Activated CD4-positive, alpha-beta memory T cell treated with anti-CD3 and anti-CD28 coated beads for 36 hours (primary cell): ENCODE measurements at regions of chr5 and their contacts with region 1.

Region 1: GRCh38 chr5:95961617-95962474 is at the start of gene ELL2:
- DNase-seq: peak; percentile 99
- H3K4me3 Mint-ChIP-seq: peak within 1 kb of the TSS; percentile 98
- H3K27ac Mint-ChIP-seq: peak within 1 kb of the TSS; percentile 98
- H3K4me1 Mint-ChIP-seq: peaks cover 62% of the 10 kb centered on the region
- H3K27me3 Mint-ChIP-seq: no peaks in the 10 kb centered on the region
- total RNA-seq, gene ELL2: 127 to 132 TPM

Region 2: DNA sequence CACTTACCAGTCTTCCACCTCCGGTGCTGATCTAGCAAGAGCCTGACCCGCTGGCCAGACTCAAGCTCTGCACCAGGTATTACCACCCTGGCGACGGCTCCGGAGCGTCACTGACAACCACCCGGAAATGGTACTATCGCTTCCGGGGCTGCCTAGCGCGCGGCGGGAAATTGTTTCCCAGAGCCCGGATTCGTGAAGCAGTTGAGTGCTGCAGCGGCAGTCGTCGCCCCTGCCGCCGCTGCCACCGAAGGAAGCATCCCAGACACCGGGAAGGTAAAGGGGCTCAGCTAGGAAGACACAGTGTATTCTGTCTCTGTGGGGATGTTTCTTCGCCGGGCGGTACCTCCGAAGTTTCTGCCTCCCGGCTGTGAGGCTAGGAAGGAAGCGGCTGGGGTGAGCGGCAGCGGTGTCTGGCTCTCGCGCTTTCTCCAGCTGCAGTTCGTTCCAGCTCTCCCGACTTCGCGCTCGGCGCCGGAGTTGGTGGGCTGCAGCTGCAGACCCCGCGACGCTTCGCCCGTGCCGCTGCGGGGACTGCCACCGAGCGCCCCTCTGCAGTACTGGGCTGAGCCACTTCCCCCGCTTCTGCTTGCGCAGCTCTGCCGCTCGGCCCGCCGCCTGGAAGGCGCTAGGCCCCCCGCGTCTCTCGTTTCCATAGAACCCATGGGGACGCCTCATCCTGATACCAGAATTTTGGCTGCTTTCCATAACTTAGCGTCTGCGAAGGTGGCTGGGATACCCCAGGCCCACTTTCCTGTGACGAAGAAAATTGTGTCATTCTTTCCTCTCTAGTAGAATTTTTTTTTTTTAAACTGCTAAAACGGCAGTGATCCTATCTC is 1343.1 kb before region 1 on chr5 and contains the starts of genes KIAA0825 and SLF1:
- CTCF ChIA-PET with region 1: no interaction called
- POLR2A ChIA-PET with region 1: no interaction called
- intact Hi-C with region 1: loop called (anchors 5 kb)
- DNase-seq: peak; percentile 94
- H3K4me3 Mint-ChIP-seq: peak within 1 kb of the TSS; percentile 94
- H3K27ac Mint-ChIP-seq: peak within 1 kb of the TSS; percentile 94
- H3K4me1 Mint-ChIP-seq: peaks cover 38% of the 10 kb centered on the region
- H3K27me3 Mint-ChIP-seq: no peaks in the 10 kb centered on the region
- total RNA-seq, gene KIAA0825: 0.68 to 0.69 TPM
- total RNA-seq, gene SLF1: 14.5 to 15.9 TPM

Region 3: DNA sequence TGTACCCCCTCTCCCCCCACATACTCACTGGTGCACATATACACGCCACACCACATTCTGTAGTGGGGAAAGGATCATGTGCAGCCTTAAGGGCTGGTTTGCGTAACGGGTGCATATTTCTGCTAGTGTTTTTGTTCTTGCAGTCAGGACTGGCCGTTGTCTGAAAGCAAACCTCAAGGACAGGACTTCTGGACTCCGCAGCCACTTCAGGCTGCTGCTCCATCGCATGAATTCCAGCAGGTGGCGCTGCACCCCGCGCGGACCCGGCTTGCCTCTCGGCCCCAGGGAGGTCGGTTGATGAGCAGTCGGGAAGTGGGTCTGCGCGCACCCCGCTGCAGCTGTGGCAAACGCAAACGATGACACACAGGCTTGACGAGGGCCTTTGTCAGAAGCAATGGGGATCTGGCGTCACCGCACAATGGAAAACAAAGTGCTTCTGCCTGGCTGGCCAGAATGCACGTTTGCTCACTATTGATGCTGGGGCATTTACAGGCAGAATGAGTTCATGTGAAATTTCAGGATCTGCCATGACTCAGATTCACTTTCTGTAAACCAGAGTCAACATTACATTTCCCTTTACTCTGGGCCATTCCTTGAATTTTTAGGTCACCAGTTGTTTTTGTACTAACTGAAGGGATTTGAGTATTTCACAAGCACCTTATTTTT is 103.1 kb before region 1 on chr5:
- CTCF ChIA-PET with region 1: interaction called, 6 read pairs
- POLR2A ChIA-PET with region 1: interaction called, 4 read pairs
- intact Hi-C with region 1: loop called (anchors 1 kb)
- DNase-seq: peak; percentile 97
- H3K4me3 Mint-ChIP-seq: peak overlapping the region; percentile 40
- H3K27ac Mint-ChIP-seq: peak overlapping the region; percentile 68
- H3K4me1 Mint-ChIP-seq: peaks cover 55% of the 10 kb centered on the region
- H3K27me3 Mint-ChIP-seq: no peaks in the 10 kb centered on the region

Region 4: GRCh38 chr5:96026406-96027041 is 64.7 kb after region 1 on chr5:
- CTCF ChIA-PET with region 1: no interaction called
- POLR2A ChIA-PET with region 1: no interaction called
- intact Hi-C with region 1: no loop called
- DNase-seq: no peak
- H3K4me3 Mint-ChIP-seq: no peak overlapping the region
- H3K27ac Mint-ChIP-seq: no peak overlapping the region
- H3K4me1 Mint-ChIP-seq: no peaks in the 10 kb centered on the region
- H3K27me3 Mint-ChIP-seq: peaks cover 3% of the 10 kb centered on the region

Region 5: GRCh38 chr5:96065577-96066385 is 103.9 kb after region 1 on chr5:
- CTCF ChIA-PET with region 1: interaction called, 3 read pairs
- POLR2A ChIA-PET with region 1: interaction called, 5 read pairs
- intact Hi-C with region 1: loop called (anchors 1 kb)
- DNase-seq: peak; percentile 38
- H3K4me3 Mint-ChIP-seq: no peak overlapping the region
- H3K27ac Mint-ChIP-seq: peak overlapping the region; percentile 83
- H3K4me1 Mint-ChIP-seq: peaks cover 48% of the 10 kb centered on the region
- H3K27me3 Mint-ChIP-seq: no peaks in the 10 kb centered on the region

Region 6: DNA sequence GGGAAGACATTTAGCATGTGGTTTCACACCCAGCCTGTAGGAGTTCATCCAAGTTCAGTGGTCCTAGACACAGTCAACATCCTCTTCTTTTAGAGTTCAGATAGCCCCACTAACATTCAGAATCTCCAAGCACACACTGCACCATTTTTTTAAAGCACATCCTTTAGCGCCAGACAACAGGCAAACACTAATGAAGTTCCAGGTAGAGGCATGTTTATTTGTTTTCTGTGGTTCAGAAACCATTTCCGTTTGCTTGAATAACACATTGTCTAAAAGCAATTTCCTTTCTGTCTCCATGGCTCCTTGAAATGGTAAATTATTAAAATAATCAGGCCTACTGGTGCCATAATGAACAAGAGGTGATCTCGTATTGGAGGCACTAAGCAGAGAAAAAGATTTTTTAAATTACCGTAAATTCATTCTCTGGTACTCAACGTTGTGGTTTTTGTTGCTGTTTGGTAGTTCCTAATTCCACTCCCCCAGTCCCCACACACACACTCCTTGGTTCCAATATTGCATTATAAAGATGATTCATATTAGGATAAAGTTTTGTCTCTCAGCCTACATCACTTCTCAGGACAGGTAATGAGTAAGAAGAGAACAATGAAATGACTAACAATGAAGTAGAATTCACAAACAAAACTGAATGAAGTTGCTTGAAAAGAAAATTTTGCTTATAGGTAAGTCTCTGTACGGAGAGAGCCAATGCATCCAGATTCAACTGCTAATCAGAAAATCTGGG is 318.1 kb after region 1 on chr5:
- CTCF ChIA-PET with region 1: interaction called, 3 read pairs
- POLR2A ChIA-PET with region 1: no interaction called
- intact Hi-C with region 1: loop called (anchors 1 kb)
- DNase-seq: peak; percentile 51
- H3K4me3 Mint-ChIP-seq: peak overlapping the region; percentile 7
- H3K27ac Mint-ChIP-seq: peak overlapping the region; percentile 31
- H3K4me1 Mint-ChIP-seq: peaks cover 26% of the 10 kb centered on the region
- H3K27me3 Mint-ChIP-seq: peaks cover 29% of the 10 kb centered on the region

Region 7: GRCh38 chr5:96702503-96703383 is 740.9 kb after region 1 on chr5:
- CTCF ChIA-PET with region 1: no interaction called
- POLR2A ChIA-PET with region 1: no interaction called
- intact Hi-C with region 1: loop called (anchors 5 kb)
- DNase-seq: peak; percentile 92
- H3K4me3 Mint-ChIP-seq: peak overlapping the region; percentile 84
- H3K27ac Mint-ChIP-seq: peak overlapping the region; percentile 85
- H3K4me1 Mint-ChIP-seq: peaks cover 52% of the 10 kb centered on the region
- H3K27me3 Mint-ChIP-seq: no peaks in the 10 kb centered on the region